OCI-LY7 (cell line): ENCODE measurements at regions of chr16 and their contacts with region 1.

Region 1: GRCh38 chr16:17301593-17302135 is 169.1 kb downstream of the XYLT1 start:
- DNase-seq: peak; percentile 99
- H3K4me3 ChIP-seq: peak overlapping the region; percentile 45
- H3K27ac ChIP-seq: peak overlapping the region; percentile 99
- H3K4me1 ChIP-seq: peaks cover 85% of the 10 kb centered on the region
- CTCF ChIP-seq: no peak

Region 2: GRCh38 chr16:17194190-17194780 is 107.4 kb before region 1 on chr16:
- CTCF ChIA-PET with region 1: no interaction called
- POLR2A ChIA-PET with region 1: no interaction called
- intact Hi-C with region 1: no loop called
- DNase-seq: peak; percentile 55
- H3K4me3 ChIP-seq: no peak overlapping the region
- H3K27ac ChIP-seq: no peak overlapping the region
- H3K4me1 ChIP-seq: no peaks in the 10 kb centered on the region
- CTCF ChIP-seq: peak; percentile 87

Region 3: DNA sequence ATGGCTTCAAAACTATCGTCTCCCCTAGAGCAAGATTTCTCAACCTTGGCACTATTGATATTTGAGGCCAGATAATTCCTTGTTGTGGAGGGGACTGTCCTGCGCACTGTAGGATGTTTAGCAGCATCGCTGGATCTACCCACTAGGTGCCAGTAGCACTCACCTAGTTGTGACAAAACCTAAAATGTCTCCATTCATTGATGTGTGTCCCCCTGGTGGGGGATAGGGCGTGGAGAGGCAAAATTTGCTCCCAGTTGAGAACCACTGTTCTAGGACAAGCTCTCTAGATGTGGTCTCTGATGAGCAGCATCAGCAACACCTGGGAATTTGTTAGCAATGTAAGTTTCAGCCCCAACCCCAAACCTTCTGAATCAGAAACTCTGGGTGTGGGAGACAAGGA is 89.9 kb before region 1 on chr16:
- CTCF ChIA-PET with region 1: no interaction called
- POLR2A ChIA-PET with region 1: no interaction called
- intact Hi-C with region 1: loop called (anchors 5 kb)
- DNase-seq: peak; percentile 77
- H3K4me3 ChIP-seq: no peak overlapping the region
- H3K27ac ChIP-seq: no peak overlapping the region
- H3K4me1 ChIP-seq: peaks cover 10% of the 10 kb centered on the region
- CTCF ChIP-seq: peak; percentile 89

Region 4: DNA sequence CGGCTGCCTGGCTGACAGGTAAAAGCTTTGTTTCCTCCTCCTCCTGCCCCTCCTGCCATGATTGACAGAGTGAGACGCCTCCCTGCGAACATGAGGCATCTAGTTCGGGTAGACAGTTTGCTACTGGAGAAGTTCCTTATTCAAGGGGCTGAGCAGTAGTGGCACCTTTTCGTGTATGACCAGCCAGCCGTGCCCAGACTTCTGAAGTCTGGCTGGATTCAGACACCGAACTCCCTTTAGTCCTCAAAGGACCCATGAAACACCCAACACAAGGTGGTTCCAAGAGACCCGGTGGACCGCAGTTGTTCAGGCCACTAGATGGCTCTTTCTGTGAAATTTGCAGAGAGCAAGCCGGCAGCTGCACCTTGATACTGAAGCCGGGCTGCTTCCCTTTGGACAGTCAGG is 23.7 kb before region 1 on chr16:
- CTCF ChIA-PET with region 1: interaction called, 8 read pairs
- POLR2A ChIA-PET with region 1: interaction called, 47 read pairs
- intact Hi-C with region 1: loop called (anchors 1 kb)
- DNase-seq: peak; percentile 74
- H3K4me3 ChIP-seq: peak overlapping the region; percentile 21
- H3K27ac ChIP-seq: peak overlapping the region; percentile 6
- H3K4me1 ChIP-seq: peaks cover 63% of the 10 kb centered on the region
- CTCF ChIP-seq: peak; percentile 82

Region 5: DNA sequence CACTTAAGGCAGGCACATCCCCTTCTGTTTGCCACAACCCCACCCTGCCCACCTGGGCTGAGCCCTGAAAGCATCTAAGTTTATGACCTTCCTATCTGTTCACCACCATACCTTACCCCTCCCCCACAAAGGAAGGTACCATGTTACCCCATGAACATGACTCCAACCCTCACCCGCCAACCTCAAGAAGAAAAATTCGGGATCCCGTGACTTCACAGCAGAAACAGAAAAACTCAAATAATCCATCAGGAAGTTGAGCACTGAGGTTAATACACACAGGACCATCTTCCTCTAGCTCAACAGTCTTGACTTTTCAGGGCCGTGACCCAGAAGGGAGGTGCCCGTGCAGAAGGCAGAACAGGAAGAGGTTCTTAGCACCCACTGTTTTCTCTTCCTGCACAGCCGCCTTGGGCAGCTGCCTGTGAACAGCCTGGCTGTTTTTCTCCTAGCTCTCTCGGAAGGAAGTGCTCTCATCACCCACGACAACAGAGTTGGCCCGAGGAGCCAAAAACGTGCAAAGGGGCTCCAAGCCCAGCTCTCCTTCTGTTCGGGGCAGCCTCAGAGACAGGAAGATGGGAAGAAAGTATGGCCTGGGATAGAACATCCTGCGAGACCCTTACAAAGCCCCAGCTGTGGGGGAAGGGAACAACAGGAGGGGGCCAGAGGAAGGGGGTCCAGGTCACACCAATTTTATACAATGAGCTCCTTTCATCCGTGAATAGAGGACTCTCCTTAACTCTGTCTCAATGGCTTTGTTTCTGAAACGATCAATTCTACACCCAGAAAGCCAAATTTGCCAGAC is 68.0 kb after region 1 on chr16:
- CTCF ChIA-PET with region 1: interaction called, 4 read pairs
- POLR2A ChIA-PET with region 1: interaction called, 10 read pairs
- intact Hi-C with region 1: loop called (anchors 1 kb)
- DNase-seq: peak; percentile 92
- H3K4me3 ChIP-seq: peak overlapping the region; percentile 61
- H3K27ac ChIP-seq: peak overlapping the region; percentile 94
- H3K4me1 ChIP-seq: peaks cover 98% of the 10 kb centered on the region
- CTCF ChIP-seq: no peak; the same call in 1 of the 2 replicates

Region 6: GRCh38 chr16:17459530-17460521 is 158.2 kb after region 1 on chr16:
- CTCF ChIA-PET with region 1: interaction called, 4 read pairs
- POLR2A ChIA-PET with region 1: interaction called, 28 read pairs
- intact Hi-C with region 1: loop called (anchors 1 kb)
- DNase-seq: peak; percentile 92
- H3K4me3 ChIP-seq: peak overlapping the region; percentile 59
- H3K27ac ChIP-seq: peak overlapping the region; percentile 94
- H3K4me1 ChIP-seq: peaks cover 74% of the 10 kb centered on the region
- CTCF ChIP-seq: no peak